CD8-positive, alpha-beta T cell (primary cell): ENCODE measurements at regions of chr6 and their contacts with region 1.

Region 1: DNA sequence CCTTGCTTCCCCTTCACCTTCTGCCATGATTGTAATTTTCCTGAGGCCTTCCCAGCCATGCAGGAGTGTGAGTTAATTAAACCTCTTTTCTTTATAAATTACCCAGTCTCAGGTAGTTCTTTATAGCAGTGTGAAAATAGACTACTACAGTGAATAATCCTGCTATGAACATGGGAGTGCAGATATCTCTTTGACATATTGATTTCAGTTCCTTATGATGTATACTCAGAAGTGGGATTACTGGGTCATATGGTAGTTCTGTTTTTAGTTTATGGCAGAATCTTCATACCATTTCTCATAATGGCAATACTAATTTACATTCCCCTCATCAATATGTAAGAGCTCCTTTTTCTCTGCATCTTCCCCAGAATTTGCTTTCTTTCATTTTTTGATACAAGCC is 26.0 kb downstream of the PACRG start:
- DNase-seq: no peak
- ATAC-seq: no peak
- H3K4me3 ChIP-seq: no peak overlapping the region
- H3K4me3 Mint-ChIP-seq: no peak overlapping the region
- H3K27ac ChIP-seq: no peak overlapping the region
- H3K27ac Mint-ChIP-seq: no peak overlapping the region
- H3K4me1 ChIP-seq: no peaks in the 10 kb centered on the region
- H3K4me1 Mint-ChIP-seq: no peaks in the 10 kb centered on the region
- H3K27me3 ChIP-seq: no peaks in the 10 kb centered on the region
- H3K27me3 Mint-ChIP-seq: no peaks in the 10 kb centered on the region
- CTCF ChIP-seq: no peak

Region 2: DNA sequence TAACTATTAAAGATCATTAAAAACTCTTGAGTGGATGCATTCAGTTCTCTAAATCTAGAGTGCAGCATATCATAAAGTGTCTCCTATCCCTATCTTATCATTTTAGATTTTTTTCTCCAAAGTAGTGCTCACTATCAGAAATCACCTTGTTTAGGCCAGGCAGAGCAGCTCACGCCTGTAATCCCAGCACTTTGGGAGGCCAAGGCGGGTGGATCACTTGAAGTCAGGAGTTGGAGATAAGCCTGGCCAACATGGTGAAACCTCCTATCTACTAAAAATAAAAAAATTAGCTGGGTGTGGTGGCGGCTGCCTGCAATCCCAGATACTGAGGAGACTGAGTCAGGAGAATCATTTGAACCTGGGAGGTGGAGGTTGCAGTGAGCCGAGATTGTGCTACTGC is 395.1 kb before region 1 on chr6:
- CTCF ChIA-PET with region 1: no interaction called
- POLR2A ChIA-PET with region 1: no interaction called
- intact Hi-C with region 1: no loop called
- DNase-seq: no peak
- ATAC-seq: no peak
- H3K4me3 ChIP-seq: no peak overlapping the region
- H3K4me3 Mint-ChIP-seq: no peak overlapping the region
- H3K27ac ChIP-seq: no peak overlapping the region
- H3K27ac Mint-ChIP-seq: no peak overlapping the region
- H3K4me1 ChIP-seq: no peaks in the 10 kb centered on the region
- H3K4me1 Mint-ChIP-seq: no peaks in the 10 kb centered on the region
- H3K27me3 ChIP-seq: no peaks in the 10 kb centered on the region
- H3K27me3 Mint-ChIP-seq: no peaks in the 10 kb centered on the region
- CTCF ChIP-seq: no peak

Region 3: DNA sequence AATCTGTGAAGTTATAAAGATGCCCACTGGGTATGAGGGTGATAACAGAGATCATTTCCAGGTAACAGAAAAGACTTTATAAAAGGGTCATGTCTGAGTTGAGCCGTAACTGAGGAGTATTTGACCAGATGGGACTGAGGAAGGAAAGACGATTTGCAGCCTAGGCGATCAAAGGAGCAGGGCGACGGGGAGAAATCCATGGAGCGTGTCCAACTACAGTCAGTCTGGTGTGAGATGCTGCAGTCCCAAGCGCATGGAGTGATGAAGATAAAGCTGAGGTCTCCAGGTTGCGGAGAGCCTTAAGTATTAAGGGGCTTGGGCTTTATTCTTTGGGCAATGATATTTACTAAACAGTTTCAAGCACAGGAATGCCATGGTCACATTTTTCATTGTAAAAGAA is 192.9 kb before region 1 on chr6:
- CTCF ChIA-PET with region 1: no interaction called
- POLR2A ChIA-PET with region 1: no interaction called
- intact Hi-C with region 1: no loop called
- DNase-seq: no peak
- ATAC-seq: no peak
- H3K4me3 ChIP-seq: no peak overlapping the region
- H3K4me3 Mint-ChIP-seq: no peak overlapping the region
- H3K27ac ChIP-seq: no peak overlapping the region
- H3K27ac Mint-ChIP-seq: no peak overlapping the region
- H3K4me1 ChIP-seq: no peaks in the 10 kb centered on the region
- H3K4me1 Mint-ChIP-seq: no peaks in the 10 kb centered on the region
- H3K27me3 ChIP-seq: no peaks in the 10 kb centered on the region
- H3K27me3 Mint-ChIP-seq: no peaks in the 10 kb centered on the region
- CTCF ChIP-seq: no peak

Region 4: DNA sequence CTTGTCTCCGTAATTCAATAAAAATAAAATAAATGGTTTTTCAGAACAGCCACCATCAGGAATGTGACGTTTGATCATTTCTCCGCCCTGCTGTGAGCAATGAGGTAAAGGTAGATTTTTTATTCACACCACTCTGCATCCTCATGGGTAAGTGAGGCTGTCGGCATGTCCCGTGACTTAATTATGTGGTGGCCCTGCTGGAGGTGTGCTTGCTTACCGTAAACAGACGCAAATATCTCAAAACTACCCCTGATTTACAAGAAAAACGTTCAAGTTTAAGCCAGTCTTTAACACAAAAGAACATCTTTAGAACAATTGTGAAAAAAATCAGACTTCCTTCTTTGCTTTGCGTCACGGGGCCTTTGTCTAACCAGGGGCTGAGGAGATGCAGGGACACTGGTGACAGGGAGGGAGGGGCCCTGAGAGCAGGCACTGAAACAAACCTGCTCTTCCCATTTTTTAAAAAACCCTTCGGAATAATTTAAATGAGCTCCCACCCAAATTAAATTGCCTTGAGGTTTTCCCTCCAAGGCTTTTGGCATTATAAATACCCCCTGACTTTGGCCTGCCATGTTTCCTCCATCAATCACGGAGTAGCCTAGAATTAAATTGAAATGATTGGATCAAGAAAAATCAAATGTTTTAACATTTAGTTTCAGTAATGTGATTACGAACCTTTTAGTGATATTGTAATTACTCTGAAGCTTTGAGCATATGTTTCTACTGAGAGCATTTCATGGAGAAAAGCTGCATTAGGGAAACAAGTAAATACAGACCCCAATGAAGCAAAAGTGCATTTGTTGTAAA is 39.6 kb before region 1 on chr6:
- CTCF ChIA-PET with region 1: no interaction called
- POLR2A ChIA-PET with region 1: no interaction called
- intact Hi-C with region 1: no loop called
- DNase-seq: no peak
- ATAC-seq: no peak
- H3K4me3 ChIP-seq: no peak overlapping the region
- H3K4me3 Mint-ChIP-seq: no peak overlapping the region
- H3K27ac ChIP-seq: no peak overlapping the region
- H3K27ac Mint-ChIP-seq: no peak overlapping the region
- H3K4me1 ChIP-seq: no peaks in the 10 kb centered on the region
- H3K4me1 Mint-ChIP-seq: no peaks in the 10 kb centered on the region
- H3K27me3 ChIP-seq: no peaks in the 10 kb centered on the region
- H3K27me3 Mint-ChIP-seq: no peaks in the 10 kb centered on the region
- CTCF ChIP-seq: no peak

Region 5: GRCh38 chr6:162778603-162779002 is 24.8 kb after region 1 on chr6:
- CTCF ChIA-PET with region 1: no interaction called
- POLR2A ChIA-PET with region 1: no interaction called
- intact Hi-C with region 1: no loop called
- DNase-seq: no peak
- ATAC-seq: no peak
- H3K4me3 ChIP-seq: no peak overlapping the region
- H3K4me3 Mint-ChIP-seq: no peak overlapping the region
- H3K27ac ChIP-seq: no peak overlapping the region
- H3K27ac Mint-ChIP-seq: no peak overlapping the region
- H3K4me1 ChIP-seq: no peaks in the 10 kb centered on the region
- H3K4me1 Mint-ChIP-seq: no peaks in the 10 kb centered on the region
- H3K27me3 ChIP-seq: no peaks in the 10 kb centered on the region
- H3K27me3 Mint-ChIP-seq: no peaks in the 10 kb centered on the region
- CTCF ChIP-seq: no peak

Region 6: GRCh38 chr6:162964488-162965140 is 210.8 kb after region 1 on chr6:
- CTCF ChIA-PET with region 1: no interaction called
- POLR2A ChIA-PET with region 1: interaction called, 10 read pairs
- intact Hi-C with region 1: no loop called
- DNase-seq: no peak
- ATAC-seq: no peak
- H3K4me3 ChIP-seq: no peak overlapping the region
- H3K4me3 Mint-ChIP-seq: no peak overlapping the region
- H3K27ac ChIP-seq: no peak overlapping the region
- H3K27ac Mint-ChIP-seq: no peak overlapping the region
- H3K4me1 ChIP-seq: no peaks in the 10 kb centered on the region
- H3K4me1 Mint-ChIP-seq: no peaks in the 10 kb centered on the region
- H3K27me3 ChIP-seq: no peaks in the 10 kb centered on the region
- H3K27me3 Mint-ChIP-seq: no peaks in the 10 kb centered on the region
- CTCF ChIP-seq: no peak